GM12878 (cell line): ENCODE measurements at regions of chr2 and their contacts with region 1.

Region 1: DNA sequence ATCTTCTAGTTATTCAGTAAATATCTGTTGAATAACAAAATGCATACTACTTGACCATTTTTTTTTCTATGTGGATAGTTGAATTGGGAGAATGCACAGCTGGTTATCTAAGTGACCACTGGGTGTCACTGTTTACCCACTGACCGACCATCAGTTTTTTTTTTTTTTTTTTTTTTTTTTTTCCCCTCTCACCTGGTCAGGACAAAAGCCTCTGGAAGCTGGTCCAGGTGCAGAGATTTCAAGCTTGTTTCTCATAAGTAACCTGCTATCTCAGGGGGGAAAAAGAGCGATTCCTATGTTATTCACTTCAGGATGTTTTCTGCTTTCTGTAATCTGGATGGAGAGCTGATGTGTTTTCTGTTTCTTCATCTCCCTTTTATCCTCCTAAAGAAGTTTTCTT is 256.0 kb downstream of the DCDC2C start:
- DNase-seq: no peak
- ATAC-seq: peak; percentile 44
- H3K4me3 ChIP-seq: no peak overlapping the region
- H3K27ac ChIP-seq: no peak overlapping the region
- H3K4me1 ChIP-seq: no peaks in the 10 kb centered on the region
- H3K27me3 ChIP-seq: no peaks in the 10 kb centered on the region
- CTCF ChIP-seq: peak; percentile 65 to 77 (median 69)
- EP300 ChIP-seq: no peak
- POLR2A ChIP-seq: no peak
- RAD21 ChIP-seq: peak; percentile 85

Region 2: DNA sequence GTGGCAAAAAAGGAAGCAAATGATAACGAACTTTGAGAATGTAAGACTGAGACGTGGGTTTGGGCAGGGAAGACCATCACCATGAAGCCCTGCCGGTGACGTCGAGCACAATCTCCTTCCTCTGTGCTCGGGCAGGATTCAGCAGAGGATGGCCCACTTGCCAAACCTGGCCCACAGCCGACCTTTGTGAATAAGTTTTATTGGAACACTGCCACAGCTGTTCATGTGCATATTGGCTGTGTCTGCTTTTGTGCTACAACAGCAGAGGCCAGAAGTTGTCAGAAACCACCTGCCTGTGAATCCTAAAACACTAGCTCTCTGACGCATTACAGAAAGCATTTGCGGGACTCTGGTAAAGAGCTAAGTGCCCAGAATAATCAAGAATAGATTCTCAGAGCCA is 1852.2 kb before region 1 on chr2:
- CTCF ChIA-PET with region 1: no interaction called
- POLR2A ChIA-PET with region 1: no interaction called
- RAD21 ChIA-PET with region 1: no interaction called
- SMC1A ChIA-PET with region 1: no interaction called
- in situ Hi-C with region 1: no loop called
- intact Hi-C with region 1: no loop called
- DNase-seq: no peak
- ATAC-seq: no peak
- H3K4me3 ChIP-seq: no peak overlapping the region
- H3K27ac ChIP-seq: no peak overlapping the region
- H3K4me1 ChIP-seq: no peaks in the 10 kb centered on the region
- H3K27me3 ChIP-seq: no peaks in the 10 kb centered on the region
- CTCF ChIP-seq: no peak
- EP300 ChIP-seq: no peak
- POLR2A ChIP-seq: no peak
- RAD21 ChIP-seq: no peak

Region 3: DNA sequence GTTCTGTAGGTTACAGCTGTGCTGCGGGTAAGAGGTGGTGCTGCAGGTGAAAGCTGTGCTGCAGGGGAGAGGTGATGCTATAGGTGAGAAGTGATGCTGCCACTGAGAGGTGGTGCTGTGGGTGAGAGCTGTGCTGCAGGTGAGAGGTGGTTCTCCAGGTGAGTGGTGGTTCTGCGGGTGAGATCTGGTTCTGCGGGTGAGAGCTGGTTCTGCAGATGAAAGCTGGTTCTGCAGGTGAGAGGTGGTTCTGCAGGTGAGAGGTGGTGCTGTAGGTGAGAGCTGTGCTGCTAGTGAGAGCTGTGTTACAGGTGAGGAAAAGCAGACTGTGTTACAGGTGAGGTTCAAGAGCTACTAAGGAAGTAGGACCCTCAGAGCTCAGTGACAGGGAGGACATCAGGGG is 39.8 kb before region 1 on chr2:
- CTCF ChIA-PET with region 1: no interaction called
- POLR2A ChIA-PET with region 1: no interaction called
- RAD21 ChIA-PET with region 1: no interaction called
- SMC1A ChIA-PET with region 1: no interaction called
- in situ Hi-C with region 1: no loop called
- intact Hi-C with region 1: no loop called
- DNase-seq: no peak
- ATAC-seq: no peak
- H3K4me3 ChIP-seq: no peak overlapping the region
- H3K27ac ChIP-seq: no peak overlapping the region
- H3K4me1 ChIP-seq: no peaks in the 10 kb centered on the region
- H3K27me3 ChIP-seq: no peaks in the 10 kb centered on the region; a peak in 1 of 4 replicates
- CTCF ChIP-seq: no peak
- EP300 ChIP-seq: no peak
- POLR2A ChIP-seq: no peak
- RAD21 ChIP-seq: no peak

Region 4: GRCh38 chr2:3981446-3981987 is 22.1 kb after region 1 on chr2:
- CTCF ChIA-PET with region 1: interaction called, 14 read pairs
- POLR2A ChIA-PET with region 1: no interaction called
- RAD21 ChIA-PET with region 1: no interaction called
- SMC1A ChIA-PET with region 1: no interaction called
- in situ Hi-C with region 1: no loop called
- intact Hi-C with region 1: no loop called
- DNase-seq: no peak
- ATAC-seq: no peak
- H3K4me3 ChIP-seq: no peak overlapping the region
- H3K27ac ChIP-seq: no peak overlapping the region
- H3K4me1 ChIP-seq: no peaks in the 10 kb centered on the region
- H3K27me3 ChIP-seq: no peaks in the 10 kb centered on the region
- CTCF ChIP-seq: no peak
- EP300 ChIP-seq: no peak
- POLR2A ChIP-seq: no peak
- RAD21 ChIP-seq: no peak

Region 5: GRCh38 chr2:4053769-4054493 is 94.6 kb after region 1 on chr2:
- CTCF ChIA-PET with region 1: interaction called, 3 read pairs
- POLR2A ChIA-PET with region 1: no interaction called
- RAD21 ChIA-PET with region 1: no interaction called
- SMC1A ChIA-PET with region 1: no interaction called
- in situ Hi-C with region 1: no loop called
- intact Hi-C with region 1: loop called (anchors 1 kb)
- DNase-seq: no peak
- ATAC-seq: no peak
- H3K4me3 ChIP-seq: no peak overlapping the region
- H3K27ac ChIP-seq: no peak overlapping the region
- H3K4me1 ChIP-seq: no peaks in the 10 kb centered on the region
- H3K27me3 ChIP-seq: no peaks in the 10 kb centered on the region; a peak in 1 of 4 replicates
- CTCF ChIP-seq: no peak; a peak in 1 of 6 replicates
- EP300 ChIP-seq: no peak
- POLR2A ChIP-seq: no peak
- RAD21 ChIP-seq: no peak

Region 6: DNA sequence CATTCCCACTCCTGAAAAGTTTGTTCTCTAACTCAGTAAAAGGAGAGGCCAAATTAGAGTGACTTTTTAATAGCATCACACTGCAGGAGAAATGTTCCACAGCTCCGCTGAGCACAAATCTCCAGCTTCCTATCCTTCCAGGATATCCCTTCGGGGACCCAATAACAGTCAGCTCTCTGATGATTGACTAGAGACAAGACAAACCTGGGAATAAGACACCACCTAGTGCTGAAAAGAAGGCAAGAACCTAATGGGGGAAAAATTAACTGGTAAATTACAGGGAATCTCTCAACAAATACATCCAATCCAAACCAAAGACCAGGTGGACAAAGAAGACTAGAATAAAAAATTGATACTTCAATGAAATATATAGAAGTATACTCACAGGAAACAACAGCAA is 755.7 kb after region 1 on chr2:
- CTCF ChIA-PET with region 1: interaction called, 5 read pairs
- POLR2A ChIA-PET with region 1: no interaction called
- RAD21 ChIA-PET with region 1: no interaction called
- SMC1A ChIA-PET with region 1: no interaction called
- in situ Hi-C with region 1: no loop called
- intact Hi-C with region 1: loop called (anchors 5 kb)
- DNase-seq: no peak
- ATAC-seq: no peak
- H3K4me3 ChIP-seq: no peak overlapping the region
- H3K27ac ChIP-seq: no peak overlapping the region
- H3K4me1 ChIP-seq: no peaks in the 10 kb centered on the region
- H3K27me3 ChIP-seq: no peaks in the 10 kb centered on the region
- CTCF ChIP-seq: no peak
- EP300 ChIP-seq: no peak
- POLR2A ChIP-seq: no peak
- RAD21 ChIP-seq: no peak

Region 7: GRCh38 chr2:4762951-4763376 is 803.6 kb after region 1 on chr2:
- CTCF ChIA-PET with region 1: no interaction called
- POLR2A ChIA-PET with region 1: no interaction called
- RAD21 ChIA-PET with region 1: no interaction called
- SMC1A ChIA-PET with region 1: no interaction called
- in situ Hi-C with region 1: no loop called
- intact Hi-C with region 1: loop called (anchors 5 kb)
- DNase-seq: no peak
- ATAC-seq: no peak
- H3K4me3 ChIP-seq: no peak overlapping the region
- H3K27ac ChIP-seq: no peak overlapping the region
- H3K4me1 ChIP-seq: no peaks in the 10 kb centered on the region
- H3K27me3 ChIP-seq: no peaks in the 10 kb centered on the region
- CTCF ChIP-seq: peak in 2 of 3 experiments; percentile 29 to 43; a peak in 3 of 6 replicates
- EP300 ChIP-seq: no peak
- POLR2A ChIP-seq: no peak
- RAD21 ChIP-seq: 0 out of 2 replicates have a peak, but pooled peaks have one; percentile 20

Region 8: DNA sequence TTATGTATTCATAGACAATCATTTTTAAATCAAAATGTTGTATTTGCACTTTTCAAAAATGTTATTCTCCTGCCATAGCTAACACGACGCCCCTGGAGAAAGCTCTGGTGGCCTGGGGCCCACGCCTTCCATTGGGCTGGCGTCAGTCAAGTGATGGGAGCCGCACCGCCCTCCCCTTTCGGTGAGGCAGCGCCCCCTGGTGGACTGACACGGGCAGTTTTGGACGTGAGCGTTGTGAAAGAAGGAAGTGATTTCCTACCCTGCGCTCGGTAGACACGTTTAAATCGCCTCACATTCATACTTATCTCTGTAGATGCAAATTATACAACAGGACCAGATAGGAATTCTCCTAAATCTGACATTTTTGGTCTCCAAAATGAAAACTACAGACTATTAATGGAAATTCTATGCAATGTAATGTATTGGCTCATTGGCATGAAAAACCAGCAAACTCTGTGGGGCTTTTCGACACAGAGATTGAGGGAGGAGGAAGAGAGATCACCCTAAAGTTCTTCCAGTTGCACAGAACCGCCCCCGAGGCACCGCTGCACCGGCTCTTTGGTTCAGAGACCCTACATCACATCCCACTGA is 1406.6 kb after region 1 on chr2:
- CTCF ChIA-PET with region 1: interaction called, 12 read pairs
- POLR2A ChIA-PET with region 1: no interaction called
- RAD21 ChIA-PET with region 1: interaction called, 3 read pairs
- SMC1A ChIA-PET with region 1: interaction called, 4 read pairs
- in situ Hi-C with region 1: loop called (anchors 25 kb)
- intact Hi-C with region 1: loop called (anchors 1 kb)
- DNase-seq: no peak
- ATAC-seq: peak; percentile 99
- H3K4me3 ChIP-seq: no peak overlapping the region
- H3K27ac ChIP-seq: no peak overlapping the region
- H3K4me1 ChIP-seq: no peaks in the 10 kb centered on the region
- H3K27me3 ChIP-seq: no peaks in the 10 kb centered on the region
- CTCF ChIP-seq: peak; percentile 60 to 66 (median 65)
- EP300 ChIP-seq: no peak
- POLR2A ChIP-seq: no peak
- RAD21 ChIP-seq: peak; percentile 44

Region 9: DNA sequence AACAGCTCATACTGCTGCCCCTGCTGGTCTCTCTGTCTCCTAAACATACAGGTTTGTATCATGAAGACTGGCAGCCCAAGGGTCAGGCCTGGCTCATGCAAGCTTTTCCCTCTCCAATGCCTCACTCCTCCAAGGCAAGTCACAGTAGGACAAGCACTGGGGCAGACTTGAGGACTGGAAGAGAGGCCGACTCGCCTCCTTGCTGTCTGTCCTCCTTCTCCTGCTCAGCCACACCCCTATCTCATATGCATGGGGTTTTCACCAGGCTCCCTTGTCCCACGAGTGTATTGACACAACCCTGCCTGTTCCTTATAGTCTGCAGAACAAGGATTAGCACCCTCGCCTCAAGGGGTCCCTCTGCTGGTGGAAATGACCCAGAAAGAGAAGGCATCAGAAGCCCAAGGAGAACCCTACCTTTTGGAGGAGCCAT is 1956.5 kb after region 1 on chr2:
- CTCF ChIA-PET with region 1: interaction called, 4 read pairs
- POLR2A ChIA-PET with region 1: no interaction called
- RAD21 ChIA-PET with region 1: interaction called, 3 read pairs
- SMC1A ChIA-PET with region 1: no interaction called
- in situ Hi-C with region 1: no loop called
- intact Hi-C with region 1: loop called (anchors 5 kb)
- DNase-seq: no peak
- ATAC-seq: peak; percentile 68
- H3K4me3 ChIP-seq: no peak overlapping the region
- H3K27ac ChIP-seq: no peak overlapping the region
- H3K4me1 ChIP-seq: no peaks in the 10 kb centered on the region
- H3K27me3 ChIP-seq: no peaks in the 10 kb centered on the region
- CTCF ChIP-seq: peak; percentile 38 to 52 (median 40); a peak in 5 of 6 replicates
- EP300 ChIP-seq: no peak
- POLR2A ChIP-seq: no peak
- RAD21 ChIP-seq: peak; percentile 53